Activated CD4-positive, alpha-beta T cell treated with anti-CD3 and anti-CD28 coated beads, Interleukin-2, amount 10 ng/mL, durations not matched to agents 24 days and 14 days (primary cell): ENCODE measurements at regions of chr6 and their contacts with region 1.

Region 1: GRCh38 chr6:161418463-161418945 is 144.6 kb upstream of the AGPAT4 start:
- DNase-seq: peak; percentile 80
- H3K4me3 Mint-ChIP-seq: no peak overlapping the region
- H3K27ac Mint-ChIP-seq: no peak overlapping the region
- H3K4me1 Mint-ChIP-seq: no peaks in the 10 kb centered on the region
- H3K27me3 Mint-ChIP-seq: peaks cover 4% of the 10 kb centered on the region

Region 2: GRCh38 chr6:161694995-161695394 is 276.5 kb after region 1 on chr6:
- intact Hi-C with region 1: loop called (anchors 5 kb)
- DNase-seq: peak; percentile 60
- H3K4me3 Mint-ChIP-seq: no peak overlapping the region
- H3K27ac Mint-ChIP-seq: no peak overlapping the region
- H3K4me1 Mint-ChIP-seq: no peaks in the 10 kb centered on the region
- H3K27me3 Mint-ChIP-seq: peaks cover 2% of the 10 kb centered on the region